Activated CD4-positive, alpha-beta memory T cell treated with anti-CD3 and anti-CD28 coated beads for 36 hours (primary cell): ENCODE measurements at regions of chr5 and their contacts with region 1.

Region 1: GRCh38 chr5:7878381-7878873 is 9.5 kb downstream of the MTRR start:
- DNase-seq: peak; percentile 33
- H3K4me3 Mint-ChIP-seq: no peak overlapping the region
- H3K27ac Mint-ChIP-seq: no peak overlapping the region
- H3K4me1 Mint-ChIP-seq: peaks cover 59% of the 10 kb centered on the region
- H3K27me3 Mint-ChIP-seq: no peaks in the 10 kb centered on the region

Region 2: GRCh38 chr5:7422317-7423106 is 455.9 kb before region 1 on chr5:
- CTCF ChIA-PET with region 1: no interaction called
- POLR2A ChIA-PET with region 1: no interaction called
- intact Hi-C with region 1: no loop called
- DNase-seq: no peak
- H3K4me3 Mint-ChIP-seq: no peak overlapping the region
- H3K27ac Mint-ChIP-seq: no peak overlapping the region
- H3K4me1 Mint-ChIP-seq: no peaks in the 10 kb centered on the region
- H3K27me3 Mint-ChIP-seq: peaks cover 11% of the 10 kb centered on the region

Region 3: DNA sequence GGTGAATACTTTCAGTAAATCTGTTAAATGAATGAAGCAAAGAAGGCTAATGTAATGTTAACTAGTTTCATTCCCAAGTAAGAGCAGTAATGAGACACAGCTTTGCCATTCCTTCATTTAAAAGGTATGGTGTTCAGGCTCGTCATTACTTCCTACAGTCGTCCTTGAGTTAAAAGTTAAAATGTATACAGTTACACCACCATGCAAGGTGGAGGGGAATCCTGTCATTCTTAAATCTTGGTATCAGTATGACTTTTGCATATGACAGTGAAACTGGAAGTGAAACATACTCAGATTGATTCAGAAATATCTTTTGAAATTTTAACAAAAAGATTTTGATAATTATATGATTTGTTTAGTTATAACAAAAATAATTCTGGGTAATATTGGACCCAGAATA is 16.4 kb after region 1 on chr5:
- CTCF ChIA-PET with region 1: interaction called, 3 read pairs
- POLR2A ChIA-PET with region 1: interaction called, 4 read pairs
- intact Hi-C with region 1: loop called (anchors 1 kb)
- DNase-seq: no peak
- H3K4me3 Mint-ChIP-seq: no peak overlapping the region
- H3K27ac Mint-ChIP-seq: peak overlapping the region; percentile 10
- H3K4me1 Mint-ChIP-seq: peaks cover 8% of the 10 kb centered on the region
- H3K27me3 Mint-ChIP-seq: no peaks in the 10 kb centered on the region

Region 4: DNA sequence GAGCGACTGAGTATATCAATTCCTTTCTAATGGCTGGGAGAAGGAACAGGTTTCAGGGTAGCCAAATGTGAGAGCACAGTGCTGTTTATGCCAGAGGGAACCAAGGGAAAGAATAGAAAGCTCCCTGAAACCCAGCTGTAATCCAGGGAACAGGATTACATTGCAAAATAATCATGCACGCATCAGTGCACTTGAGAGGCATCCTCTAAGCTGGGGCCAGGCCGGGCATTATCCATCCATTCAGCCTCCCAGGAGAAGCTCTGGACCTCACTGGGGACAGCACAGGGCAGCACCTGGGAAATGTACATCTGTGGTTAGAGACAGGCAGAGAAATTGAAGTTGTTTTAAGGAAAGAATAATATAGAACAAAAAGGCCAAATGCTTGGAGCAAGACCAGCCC is 63.3 kb after region 1 on chr5:
- CTCF ChIA-PET with region 1: no interaction called
- POLR2A ChIA-PET with region 1: no interaction called
- intact Hi-C with region 1: no loop called
- DNase-seq: no peak
- H3K4me3 Mint-ChIP-seq: no peak overlapping the region
- H3K27ac Mint-ChIP-seq: no peak overlapping the region
- H3K4me1 Mint-ChIP-seq: no peaks in the 10 kb centered on the region
- H3K27me3 Mint-ChIP-seq: peaks cover 14% of the 10 kb centered on the region